ENCODE measurements at regions of chr5 and their contacts with region 1.

Region 1: GRCh38 chr5:179732417-179732917 is at the start of gene MAML1:
- DNase-seq: peak; percentile 100
- H3K4me3 Mint-ChIP-seq: peak within 1 kb of the TSS; percentile 94
- H3K27ac Mint-ChIP-seq: peak within 1 kb of the TSS; percentile 88
- H3K4me1 Mint-ChIP-seq: peaks cover 23% of the 10 kb centered on the region
- H3K27me3 Mint-ChIP-seq: no peaks in the 10 kb centered on the region
- total RNA-seq, gene MAML1: 38.1 and 38.3 TPM in 2 replicates

Region 2: GRCh38 chr5:179559284-179560252 is 172.9 kb before region 1 on chr5:
- intact Hi-C with region 1: loop called (anchors 10 kb)
- DNase-seq: peak; percentile 92
- H3K4me3 Mint-ChIP-seq: peak overlapping the region; percentile 90
- H3K27ac Mint-ChIP-seq: peak overlapping the region; percentile 77
- H3K4me1 Mint-ChIP-seq: peaks cover 20% of the 10 kb centered on the region
- H3K27me3 Mint-ChIP-seq: no peaks in the 10 kb centered on the region

Region 3: DNA sequence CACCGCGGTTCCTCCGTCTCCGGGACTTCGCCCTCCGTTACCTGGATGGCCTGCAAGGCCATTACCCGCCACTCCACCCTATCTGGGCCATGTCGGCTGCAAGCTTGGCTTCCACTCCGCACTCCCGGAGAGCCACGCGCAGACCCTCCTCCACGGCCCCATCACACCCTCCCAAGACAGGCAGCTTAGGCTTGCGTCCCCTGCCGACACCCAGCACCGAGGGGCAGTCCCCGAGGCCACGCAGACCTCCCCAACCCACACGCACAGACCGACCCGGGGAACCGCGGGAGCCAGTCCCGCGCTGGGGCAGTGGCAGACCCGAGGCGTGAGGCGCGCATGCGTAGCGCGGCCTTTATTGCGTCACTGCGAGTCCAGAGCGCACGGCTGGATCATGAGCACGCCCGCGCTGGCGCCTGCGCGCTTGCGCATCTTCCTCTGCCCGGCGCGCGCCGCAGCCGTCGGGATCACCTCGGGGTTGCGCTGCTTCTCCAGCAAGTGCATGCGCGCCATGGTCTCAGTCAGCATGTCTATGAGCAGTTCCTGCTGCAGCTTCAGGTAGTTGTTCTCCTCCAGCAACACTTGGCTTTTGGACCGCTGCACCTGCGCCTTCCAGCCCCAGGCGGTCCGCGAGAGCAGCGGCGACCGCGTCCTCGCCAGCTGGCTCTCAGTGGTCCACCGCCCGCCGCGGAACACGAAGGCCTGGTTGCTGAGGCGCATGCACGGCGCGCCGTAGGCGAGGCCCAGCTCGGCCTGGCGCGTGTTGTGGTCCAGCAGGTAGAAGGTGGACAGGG is 54.0 kb before region 1 on chr5:
- intact Hi-C with region 1: loop called (anchors 1 kb)
- DNase-seq: peak; percentile 93
- H3K4me3 Mint-ChIP-seq: peak overlapping the region; percentile 96
- H3K27ac Mint-ChIP-seq: peak overlapping the region; percentile 96
- H3K4me1 Mint-ChIP-seq: peaks cover 27% of the 10 kb centered on the region
- H3K27me3 Mint-ChIP-seq: no peaks in the 10 kb centered on the region

Region 4: GRCh38 chr5:179697993-179698934 is 34.2 kb before region 1 on chr5:
- intact Hi-C with region 1: loop called (anchors 1 kb)
- DNase-seq: peak; percentile 99
- H3K4me3 Mint-ChIP-seq: peak overlapping the region; percentile 99
- H3K27ac Mint-ChIP-seq: peak overlapping the region; percentile 100
- H3K4me1 Mint-ChIP-seq: peaks cover 28% of the 10 kb centered on the region
- H3K27me3 Mint-ChIP-seq: no peaks in the 10 kb centered on the region

Region 5: DNA sequence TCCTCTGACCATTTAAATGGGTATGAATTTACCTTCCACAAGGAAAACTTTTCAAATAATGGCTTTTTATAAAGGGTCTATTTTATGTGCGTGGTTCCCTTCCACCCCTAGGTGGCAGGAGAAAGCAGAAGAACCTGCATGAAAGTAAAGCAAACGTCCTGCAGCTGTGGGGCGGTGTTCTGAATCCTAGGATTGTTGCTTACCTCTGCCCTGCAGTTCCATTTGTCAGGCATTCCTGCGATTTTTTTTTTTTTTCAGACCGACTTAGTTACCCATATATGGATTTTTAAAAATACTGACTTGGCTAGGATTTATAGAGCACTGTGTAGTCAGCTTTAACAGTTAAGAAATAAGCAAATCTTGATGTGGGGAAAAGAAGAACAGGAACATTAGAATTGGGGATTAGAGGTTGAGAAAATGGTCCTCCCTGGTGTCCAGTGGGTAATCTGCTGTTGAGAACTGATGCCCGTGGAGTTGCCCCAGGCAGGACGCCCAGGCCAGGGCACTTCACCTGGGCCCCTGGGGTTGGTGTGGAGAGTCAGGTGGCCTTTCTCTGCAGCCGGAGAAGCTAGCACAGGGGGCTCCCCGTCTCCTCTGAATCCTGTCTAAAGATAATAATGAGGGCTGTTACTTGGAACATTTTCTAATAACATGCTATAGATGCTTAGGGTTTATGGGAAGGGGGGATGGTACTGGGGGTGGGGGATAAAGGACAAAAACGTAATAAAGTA is 30.9 kb after region 1 on chr5:
- intact Hi-C with region 1: loop called (anchors 2 kb)
- DNase-seq: peak; percentile 21
- H3K4me3 Mint-ChIP-seq: no peak overlapping the region
- H3K27ac Mint-ChIP-seq: peak overlapping the region; percentile 56
- H3K4me1 Mint-ChIP-seq: peaks cover 46% of the 10 kb centered on the region
- H3K27me3 Mint-ChIP-seq: no peaks in the 10 kb centered on the region

Region 6: DNA sequence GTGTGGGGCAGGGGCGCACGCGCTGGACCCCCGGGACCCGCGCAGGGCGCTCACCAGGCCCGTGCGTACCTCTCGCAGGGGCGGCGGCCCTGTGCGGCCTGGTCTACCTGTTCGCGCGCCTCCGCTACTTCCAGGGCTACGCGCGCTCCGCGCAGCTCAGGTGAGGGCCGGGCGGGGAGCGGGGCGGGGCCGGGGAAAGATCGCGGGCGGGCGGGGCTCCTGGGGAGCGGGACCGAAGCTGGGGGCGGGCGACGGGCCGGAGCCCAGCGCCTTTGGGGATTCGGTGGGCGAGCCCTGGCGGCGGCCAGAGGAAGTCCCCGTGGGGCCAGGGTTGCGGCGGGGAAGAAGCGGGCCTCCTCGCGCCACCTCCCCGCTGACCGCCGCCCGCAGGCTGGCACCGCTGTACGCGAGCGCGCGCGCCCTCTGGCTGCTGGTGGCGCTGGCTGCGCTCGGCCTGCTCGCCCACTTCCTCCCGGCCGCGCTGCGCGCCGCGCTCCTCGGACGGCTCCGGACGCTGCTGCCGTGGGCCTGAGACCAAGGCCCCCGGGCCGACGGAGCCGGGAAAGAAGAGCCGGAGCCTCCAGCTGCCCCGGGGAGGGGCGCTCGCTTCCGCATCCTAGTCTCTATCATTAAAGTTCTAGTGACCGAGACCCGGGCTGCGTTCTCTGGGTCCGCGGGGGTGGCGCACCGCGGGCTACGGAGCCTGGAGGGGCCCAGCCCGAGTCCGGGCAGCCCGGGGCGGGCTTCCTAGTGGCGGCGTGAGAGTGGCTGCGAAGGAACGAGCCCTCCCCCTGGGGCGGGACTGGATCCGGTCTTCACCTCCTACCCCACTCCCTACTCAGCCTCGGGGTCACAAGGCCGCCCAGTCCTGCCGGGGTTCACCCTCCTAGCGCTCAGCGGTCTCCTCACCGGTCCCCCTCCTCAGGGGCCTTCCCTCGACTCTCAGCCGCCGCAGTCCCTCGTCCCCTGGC is 63.7 kb after region 1 on chr5:
- intact Hi-C with region 1: loop called (anchors 1 kb)
- DNase-seq: peak; percentile 63
- H3K4me3 Mint-ChIP-seq: peak overlapping the region; percentile 71
- H3K27ac Mint-ChIP-seq: no peak overlapping the region
- H3K4me1 Mint-ChIP-seq: peaks cover 9% of the 10 kb centered on the region
- H3K27me3 Mint-ChIP-seq: no peaks in the 10 kb centered on the region

Region 7: GRCh38 chr5:180161420-180162303 is 429.2 kb after region 1 on chr5:
- intact Hi-C with region 1: no loop called
- DNase-seq: no peak
- H3K4me3 Mint-ChIP-seq: no peak overlapping the region
- H3K27ac Mint-ChIP-seq: no peak overlapping the region
- H3K4me1 Mint-ChIP-seq: no peaks in the 10 kb centered on the region
- H3K27me3 Mint-ChIP-seq: peaks cover 10% of the 10 kb centered on the region

Measured in activated T-helper 2 cell treated with anti-CD3 and anti-CD28 coated beads, Interferon-gamma antibody, Interleukin-2, Interleukin-4, amounts not matched to agents 10 μg/mL and 5 μg/mL and 100 μg/mL, durations not matched to agents 14 hours and 24 hours and 36 hours (primary cell).